Head of caudate nucleus (tissue), 42 donors: ENCODE measurements at regions of chr6 and their contacts with region 1.

Region 1: DNA sequence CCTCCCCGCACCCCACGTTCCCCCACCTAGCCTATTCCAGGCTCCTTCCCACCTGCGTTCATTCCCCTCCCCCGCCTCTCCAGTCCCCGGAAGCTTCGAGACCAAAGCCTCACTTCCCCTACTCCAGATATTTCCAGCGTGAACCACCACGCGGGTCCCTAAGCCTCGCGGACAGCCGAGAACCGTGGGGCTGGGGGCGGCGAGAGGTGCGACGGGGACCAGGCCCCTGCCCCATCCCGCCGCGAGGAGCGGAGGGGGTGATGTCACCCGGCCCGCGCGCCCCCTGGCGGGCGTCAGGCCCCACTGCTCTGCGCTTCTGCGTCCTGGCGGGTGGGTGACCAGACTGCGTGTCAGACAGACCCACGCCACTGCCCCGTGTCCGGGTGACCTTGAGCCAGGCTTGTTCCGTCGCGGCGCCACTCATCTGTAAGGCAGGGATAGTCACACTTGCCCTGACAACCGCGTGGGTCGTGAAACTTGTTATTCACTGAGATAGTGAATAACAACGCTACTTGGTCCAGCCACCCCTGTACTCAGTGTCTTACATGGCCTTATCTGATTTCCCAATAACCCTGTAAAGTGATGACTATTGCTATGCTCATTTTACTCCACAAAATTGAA is 9.0 kb upstream of the HSP90AB1 start:
- DNase-seq: peak; percentile 65 to 93 (median 86)

Region 2: GRCh38 chr6:44000164-44000842 is 237.6 kb before region 1 on chr6:
- intact Hi-C with region 1: no loop called
- DNase-seq: no peak

Region 3: DNA sequence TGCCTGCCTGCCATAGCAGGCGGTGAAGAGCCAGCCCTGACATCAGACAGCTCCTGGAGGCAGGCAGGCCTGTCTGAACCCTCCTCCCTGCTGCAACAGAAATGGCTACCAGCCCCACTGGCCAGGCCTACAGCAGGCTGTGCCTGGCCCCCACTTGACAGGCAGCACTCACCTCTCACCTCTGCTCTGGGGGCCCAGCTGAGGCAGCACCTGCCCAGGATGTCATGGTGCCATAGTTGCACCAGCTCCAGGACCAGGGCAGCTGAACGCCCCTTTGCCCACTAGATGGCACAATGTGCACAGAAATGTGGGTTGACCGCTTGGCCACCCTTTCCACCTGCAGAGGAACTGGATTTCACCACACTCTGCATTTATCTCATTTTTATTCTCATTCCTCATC is 141.3 kb before region 1 on chr6:
- intact Hi-C with region 1: loop called (anchors 10 kb)
- DNase-seq: peak; percentile 67 to 91 (median 81)

Region 4: GRCh38 chr6:44172731-44173500 is 65.0 kb before region 1 on chr6:
- intact Hi-C with region 1: loop called (anchors 2 kb)
- DNase-seq: peak; percentile 63 to 94 (median 86)